Activated CD4-positive, alpha-beta memory T cell treated with anti-CD3 and anti-CD28 coated beads for 36 hours (primary cell): ENCODE measurements at regions of chr13 and their contacts with region 1.

Region 1: DNA sequence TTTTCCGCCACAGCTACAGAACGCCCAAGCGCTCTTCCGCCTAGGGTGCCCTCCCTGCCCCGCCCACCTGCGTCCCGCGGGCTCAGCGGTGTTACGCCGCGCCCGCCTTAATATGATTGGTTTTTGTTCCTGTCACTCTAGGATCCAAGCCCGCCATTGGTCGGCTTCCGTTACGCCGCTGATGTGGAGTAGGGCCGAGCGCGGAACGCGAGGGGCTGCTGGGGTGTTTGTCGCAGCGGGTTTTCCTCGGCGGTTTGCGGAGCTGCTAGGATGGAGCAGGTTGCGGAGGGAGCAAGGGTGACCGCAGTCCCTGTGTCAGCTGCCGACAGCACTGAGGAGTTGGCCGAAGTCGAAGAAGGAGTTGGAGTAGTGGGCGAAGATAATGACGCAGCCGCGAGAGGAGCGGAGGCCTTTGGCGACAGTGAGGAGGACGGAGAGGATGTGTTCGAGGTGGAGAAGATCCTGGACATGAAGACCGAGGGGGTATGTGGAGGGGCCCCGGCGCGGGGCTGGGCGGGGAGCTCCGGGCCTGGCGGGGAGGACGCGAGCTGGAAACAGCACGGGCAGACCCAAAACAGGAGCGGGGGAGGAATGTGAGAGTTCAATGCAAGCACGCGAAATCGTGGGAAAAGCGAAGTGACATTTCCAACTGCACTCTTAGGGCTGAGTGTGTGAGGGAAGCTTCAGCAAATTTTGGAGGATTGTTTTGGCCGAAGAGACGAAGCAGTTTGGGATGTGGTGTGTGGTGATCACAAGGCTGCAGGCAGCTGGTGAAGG is at the start of gene MPHOSPH8:
- DNase-seq: peak; percentile 96
- H3K4me3 Mint-ChIP-seq: peak within 1 kb of the TSS; percentile 100
- H3K27ac Mint-ChIP-seq: peak within 1 kb of the TSS; percentile 98
- H3K4me1 Mint-ChIP-seq: peaks cover 25% of the 10 kb centered on the region
- H3K27me3 Mint-ChIP-seq: peaks cover 2% of the 10 kb centered on the region
- total RNA-seq, gene MPHOSPH8: 32.6 to 37.6 TPM

Region 2: GRCh38 chr13:19782049-19782726 is 148.5 kb after region 1 on chr13:
- CTCF ChIA-PET with region 1: no interaction called
- POLR2A ChIA-PET with region 1: interaction called, 5 read pairs
- intact Hi-C with region 1: loop called (anchors 1 kb)
- DNase-seq: peak; percentile 72
- H3K4me3 Mint-ChIP-seq: peak overlapping the region; percentile 98
- H3K27ac Mint-ChIP-seq: peak overlapping the region; percentile 99
- H3K4me1 Mint-ChIP-seq: peaks cover 6% of the 10 kb centered on the region
- H3K27me3 Mint-ChIP-seq: peaks cover 1% of the 10 kb centered on the region